Activated T-helper 1 cell treated with anti-CD3 and anti-CD28 coated beads, Interleukin-12 subunit alpha, Interleukin-12 subunit beta, Interleukin-2, Interleukin-4 antibody, amounts not matched to agents 30 ng/mL and 10 ng/mL and 1 ng/mL, durations not matched to agents 14 hours and 24 hours and 36 hours (primary cell): ENCODE measurements at regions of chr1 and their contacts with region 1.

Region 1: DNA sequence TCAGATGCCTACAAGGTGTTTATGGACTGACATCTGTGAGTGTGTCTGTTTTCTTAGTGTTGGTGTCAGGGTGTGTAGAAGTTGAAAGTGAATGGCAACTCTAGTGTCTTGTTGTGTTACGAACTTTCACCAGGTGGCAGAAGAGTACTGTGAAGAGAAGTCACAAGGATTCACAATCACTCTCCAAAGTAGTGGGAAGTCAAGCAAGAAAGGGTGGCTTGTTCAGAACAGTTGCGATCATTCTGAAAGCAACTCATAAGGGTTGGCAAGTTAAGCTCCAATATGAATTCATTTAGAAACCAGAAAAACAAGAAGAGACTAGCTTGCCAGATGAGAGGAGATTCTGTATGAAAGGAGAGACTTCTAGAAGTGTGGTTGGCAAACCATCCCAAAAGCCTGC is 86.1 kb downstream of the FASLG start:
- DNase-seq: peak; percentile 34
- H3K4me3 Mint-ChIP-seq: no peak overlapping the region
- H3K27ac Mint-ChIP-seq: no peak overlapping the region
- H3K4me1 Mint-ChIP-seq: peaks cover 27% of the 10 kb centered on the region
- H3K27me3 Mint-ChIP-seq: peaks cover 45% of the 10 kb centered on the region

Region 2: DNA sequence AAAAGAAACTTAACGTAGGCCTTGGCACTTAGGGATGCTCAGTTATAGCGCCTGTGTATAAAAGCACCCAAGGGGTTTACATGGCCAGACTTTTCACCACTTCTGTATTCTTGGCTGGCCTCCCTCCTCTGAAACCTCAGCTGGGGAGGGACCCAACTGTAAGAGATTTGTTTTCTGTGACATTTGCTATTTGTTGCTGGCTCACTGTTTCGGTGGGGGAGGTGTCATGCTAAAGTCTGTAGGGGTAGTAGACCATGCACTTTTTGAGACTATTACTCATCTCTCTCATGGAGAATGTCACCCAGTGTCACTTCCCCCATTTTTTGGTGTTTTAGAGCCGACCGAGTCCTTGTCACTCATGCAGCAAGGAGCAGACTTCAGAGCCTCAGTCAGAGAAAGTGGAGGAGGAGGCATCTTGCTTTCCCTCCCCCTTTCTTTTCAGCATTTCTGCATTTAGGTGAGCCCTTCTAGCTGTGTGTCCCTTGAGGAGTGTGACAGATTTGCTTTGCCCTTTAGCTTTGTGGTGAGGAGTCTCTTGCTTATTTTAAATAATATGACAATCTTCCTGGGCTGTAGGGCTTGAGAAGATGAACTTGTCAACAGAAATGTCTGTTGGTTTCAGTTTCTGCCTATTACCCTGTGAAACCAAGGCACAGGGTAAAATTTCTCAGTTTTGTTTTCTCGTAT is 74.0 kb after region 1 on chr1:
- intact Hi-C with region 1: loop called (anchors 1 kb)
- DNase-seq: peak; percentile 37
- H3K4me3 Mint-ChIP-seq: peak overlapping the region; percentile 59
- H3K27ac Mint-ChIP-seq: peak overlapping the region; percentile 78
- H3K4me1 Mint-ChIP-seq: peaks cover 47% of the 10 kb centered on the region
- H3K27me3 Mint-ChIP-seq: peaks cover 5% of the 10 kb centered on the region

Region 3: GRCh38 chr1:172895050-172895460 is 150.0 kb after region 1 on chr1:
- intact Hi-C with region 1: loop called (anchors 1 kb)
- DNase-seq: peak; percentile 34
- H3K4me3 Mint-ChIP-seq: peak overlapping the region; percentile 28
- H3K27ac Mint-ChIP-seq: peak overlapping the region; percentile 7
- H3K4me1 Mint-ChIP-seq: peaks cover 42% of the 10 kb centered on the region
- H3K27me3 Mint-ChIP-seq: peaks cover 13% of the 10 kb centered on the region

Region 4: DNA sequence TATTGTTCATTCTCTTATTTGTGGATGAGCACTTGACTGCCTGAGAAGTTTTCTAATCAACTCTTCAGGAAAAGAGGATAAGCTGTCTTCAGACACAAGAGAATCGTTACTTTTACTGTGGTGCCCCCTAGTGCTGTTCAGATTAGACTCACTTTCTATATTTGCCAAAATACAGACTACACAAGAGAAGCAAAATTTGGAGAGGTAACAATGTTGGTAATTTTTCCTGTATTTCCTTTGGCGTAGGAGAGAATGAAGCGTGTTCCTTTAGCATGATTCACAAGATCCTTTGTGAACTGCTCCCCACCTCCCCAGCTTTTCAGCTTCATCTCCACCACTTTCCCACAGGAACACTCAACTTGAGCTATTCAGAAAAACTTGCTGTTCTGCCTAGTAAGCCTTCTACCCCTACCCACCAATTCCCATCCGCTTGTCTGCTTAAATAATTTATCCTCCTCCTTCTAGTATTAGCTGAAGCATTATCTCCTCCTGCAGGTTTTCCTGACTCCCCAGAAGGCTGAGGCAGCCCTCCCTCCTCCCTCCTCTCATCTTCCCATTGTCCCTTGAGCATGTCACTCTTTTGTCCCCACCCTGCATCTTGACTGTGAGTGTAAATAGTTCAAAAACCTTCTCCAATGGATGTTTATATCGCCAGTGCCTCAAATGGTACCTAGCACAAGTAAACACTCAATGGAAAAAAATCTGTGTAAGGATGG is 457.6 kb after region 1 on chr1:
- intact Hi-C with region 1: loop called (anchors 1 kb)
- DNase-seq: no peak
- H3K4me3 Mint-ChIP-seq: no peak overlapping the region
- H3K27ac Mint-ChIP-seq: no peak overlapping the region
- H3K4me1 Mint-ChIP-seq: peaks cover 47% of the 10 kb centered on the region
- H3K27me3 Mint-ChIP-seq: peaks cover 16% of the 10 kb centered on the region

Region 5: GRCh38 chr1:173420330-173420806 is 675.4 kb after region 1 on chr1:
- intact Hi-C with region 1: loop called (anchors 1 kb)
- DNase-seq: peak; percentile 42
- H3K4me3 Mint-ChIP-seq: no peak overlapping the region
- H3K27ac Mint-ChIP-seq: no peak overlapping the region
- H3K4me1 Mint-ChIP-seq: peaks cover 13% of the 10 kb centered on the region
- H3K27me3 Mint-ChIP-seq: no peaks in the 10 kb centered on the region

Region 6: GRCh38 chr1:173867753-173868265 is 1122.8 kb after region 1 on chr1 and contains the start of gene GAS5:
- intact Hi-C with region 1: loop called (anchors 10 kb)
- DNase-seq: peak; percentile 99
- H3K4me3 Mint-ChIP-seq: peak within 1 kb of the TSS; percentile 98
- H3K27ac Mint-ChIP-seq: peak within 1 kb of the TSS; percentile 98
- H3K4me1 Mint-ChIP-seq: peaks cover 66% of the 10 kb centered on the region
- H3K27me3 Mint-ChIP-seq: no peaks in the 10 kb centered on the region
- total RNA-seq, gene GAS5: 653 and 688 TPM in 2 replicates